ENCODE measurements at regions of chr14 and their contacts with region 1.

Region 1: GRCh38 chr14:86723254-86723624 is 1193.3 kb downstream of the FLRT2 start:
- DNase-seq: peak; percentile 60
- ATAC-seq: peak; percentile 81
- H3K4me3 ChIP-seq: peak overlapping the region in 1 of 3 experiments; percentile 17; a peak in 1 of 6 replicates
- H3K27ac ChIP-seq: peak overlapping the region; percentile 71
- H3K4me1 ChIP-seq: peaks cover 56% of the 10 kb centered on the region
- H3K27me3 ChIP-seq: no peaks in the 10 kb centered on the region
- CTCF ChIP-seq: no peak
- EP300 ChIP-seq: no peak
- POLR2A ChIP-seq: no peak
- RAD21 ChIP-seq: no peak

Region 2: GRCh38 chr14:86596024-86596423 is 127.2 kb before region 1 on chr14:
- CTCF ChIA-PET with region 1: no interaction called
- POLR2A ChIA-PET with region 1: no interaction called
- in situ Hi-C with region 1: no loop called
- intact Hi-C with region 1: no loop called
- DNase-seq: no peak
- ATAC-seq: no peak
- H3K4me3 ChIP-seq: no peak overlapping the region
- H3K27ac ChIP-seq: no peak overlapping the region
- H3K4me1 ChIP-seq: no peaks in the 10 kb centered on the region
- H3K27me3 ChIP-seq: no peaks in the 10 kb centered on the region
- CTCF ChIP-seq: no peak
- EP300 ChIP-seq: no peak
- POLR2A ChIP-seq: no peak
- RAD21 ChIP-seq: no peak

Region 3: GRCh38 chr14:86712176-86712575 is 11.1 kb before region 1 on chr14:
- CTCF ChIA-PET with region 1: no interaction called
- POLR2A ChIA-PET with region 1: interaction called, 17 read pairs
- in situ Hi-C with region 1: no loop called
- intact Hi-C with region 1: loop called (anchors 2 kb)
- DNase-seq: peak; percentile 10
- ATAC-seq: no peak
- H3K4me3 ChIP-seq: no peak overlapping the region
- H3K27ac ChIP-seq: peak overlapping the region; percentile 38
- H3K4me1 ChIP-seq: peaks cover 69% of the 10 kb centered on the region
- H3K27me3 ChIP-seq: no peaks in the 10 kb centered on the region
- CTCF ChIP-seq: no peak
- EP300 ChIP-seq: peak in 1 of 2 experiments; percentile 32; a peak in 1 of 4 replicates
- POLR2A ChIP-seq: no peak
- RAD21 ChIP-seq: no peak

Region 4: DNA sequence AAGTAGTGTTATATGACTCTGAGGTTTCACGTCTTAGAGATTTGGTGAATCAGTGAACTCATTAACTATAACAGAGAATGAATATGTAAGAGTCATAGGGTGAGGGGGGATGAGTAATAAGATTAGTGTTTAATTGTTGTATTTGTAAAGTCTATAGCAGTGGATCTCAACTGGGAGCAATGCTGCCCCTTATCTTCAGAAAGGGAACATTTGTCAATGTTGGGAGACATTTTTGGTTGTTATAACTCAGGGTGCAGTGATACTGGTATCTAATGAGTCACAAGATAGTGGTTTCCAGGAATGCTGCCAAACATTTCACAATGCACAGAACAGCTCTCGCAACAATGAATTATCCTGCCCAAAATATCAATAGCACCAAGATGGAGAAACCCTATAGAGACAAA is 76.0 kb after region 1 on chr14:
- CTCF ChIA-PET with region 1: no interaction called
- POLR2A ChIA-PET with region 1: no interaction called
- in situ Hi-C with region 1: no loop called
- intact Hi-C with region 1: loop called (anchors 5 kb)
- DNase-seq: peak; percentile 72
- ATAC-seq: peak; percentile 31; the same call in 1 of the 3 replicates
- H3K4me3 ChIP-seq: no peak overlapping the region
- H3K27ac ChIP-seq: no peak overlapping the region
- H3K4me1 ChIP-seq: peaks cover 44% of the 10 kb centered on the region
- H3K27me3 ChIP-seq: no peaks in the 10 kb centered on the region
- CTCF ChIP-seq: no peak
- EP300 ChIP-seq: 0 out of 4 replicates have a peak, but pooled peaks of 1 of the 2 experiments have one; percentile 16
- POLR2A ChIP-seq: no peak
- RAD21 ChIP-seq: no peak

Region 5: GRCh38 chr14:86892152-86892956 is 169.1 kb after region 1 on chr14:
- CTCF ChIA-PET with region 1: no interaction called
- POLR2A ChIA-PET with region 1: interaction called, 3 read pairs
- in situ Hi-C with region 1: loop called (anchors 10 kb)
- intact Hi-C with region 1: no loop called
- DNase-seq: peak; percentile 79
- ATAC-seq: peak; percentile 81
- H3K4me3 ChIP-seq: no peak overlapping the region
- H3K27ac ChIP-seq: peak overlapping the region; percentile 24
- H3K4me1 ChIP-seq: peaks cover 56% of the 10 kb centered on the region
- H3K27me3 ChIP-seq: no peaks in the 10 kb centered on the region
- CTCF ChIP-seq: no peak
- EP300 ChIP-seq: peak in 1 of 2 experiments; percentile 85; a peak in 2 of 4 replicates
- POLR2A ChIP-seq: no peak
- RAD21 ChIP-seq: no peak